Transverse colon (tissue), 4 donors: ENCODE measurements at regions of chr12 and their contacts with region 1.

Region 1: DNA sequence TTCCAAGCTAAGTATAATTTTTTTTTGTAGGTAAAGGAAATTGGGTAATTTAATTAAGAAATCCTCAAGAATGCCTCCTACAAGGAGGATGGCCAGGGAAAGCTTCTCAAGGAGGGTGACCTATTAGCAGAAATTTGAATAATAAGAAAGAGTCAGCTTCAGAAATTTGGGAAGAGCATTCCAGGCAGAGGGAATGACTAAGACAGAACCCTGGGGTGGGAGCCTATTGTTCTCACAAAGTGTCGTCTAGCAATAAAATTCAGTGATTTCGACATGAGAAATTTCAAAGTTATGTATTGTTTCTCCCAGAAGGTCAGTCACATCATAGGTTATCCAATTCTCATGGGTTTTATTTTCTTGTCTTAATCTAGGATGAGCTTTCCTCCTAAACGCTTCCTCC is 1168.4 kb downstream of the AACS start:
- DNase-seq: no peak
- H3K4me3 ChIP-seq: no peak overlapping the region
- H3K27ac ChIP-seq: no peak overlapping the region
- H3K4me1 ChIP-seq: no peaks in the 10 kb centered on the region
- H3K27me3 ChIP-seq: no peaks in the 10 kb centered on the region
- CTCF ChIP-seq: no peak
- EP300 ChIP-seq: no peak
- POLR2A ChIP-seq: no peak

Region 2: GRCh38 chr12:126761420-126761819 is 527.8 kb after region 1 on chr12:
- in situ Hi-C with region 1: no loop called
- intact Hi-C with region 1: loop called (anchors 5 kb)
- DNase-seq: no peak
- H3K4me3 ChIP-seq: no peak overlapping the region
- H3K27ac ChIP-seq: no peak overlapping the region
- H3K4me1 ChIP-seq: no peaks in the 10 kb centered on the region
- H3K27me3 ChIP-seq: no peaks in the 10 kb centered on the region
- CTCF ChIP-seq: no peak
- EP300 ChIP-seq: no peak
- POLR2A ChIP-seq: no peak